ENCODE measurements at regions of chr4 and their contacts with region 1.

Region 1: DNA sequence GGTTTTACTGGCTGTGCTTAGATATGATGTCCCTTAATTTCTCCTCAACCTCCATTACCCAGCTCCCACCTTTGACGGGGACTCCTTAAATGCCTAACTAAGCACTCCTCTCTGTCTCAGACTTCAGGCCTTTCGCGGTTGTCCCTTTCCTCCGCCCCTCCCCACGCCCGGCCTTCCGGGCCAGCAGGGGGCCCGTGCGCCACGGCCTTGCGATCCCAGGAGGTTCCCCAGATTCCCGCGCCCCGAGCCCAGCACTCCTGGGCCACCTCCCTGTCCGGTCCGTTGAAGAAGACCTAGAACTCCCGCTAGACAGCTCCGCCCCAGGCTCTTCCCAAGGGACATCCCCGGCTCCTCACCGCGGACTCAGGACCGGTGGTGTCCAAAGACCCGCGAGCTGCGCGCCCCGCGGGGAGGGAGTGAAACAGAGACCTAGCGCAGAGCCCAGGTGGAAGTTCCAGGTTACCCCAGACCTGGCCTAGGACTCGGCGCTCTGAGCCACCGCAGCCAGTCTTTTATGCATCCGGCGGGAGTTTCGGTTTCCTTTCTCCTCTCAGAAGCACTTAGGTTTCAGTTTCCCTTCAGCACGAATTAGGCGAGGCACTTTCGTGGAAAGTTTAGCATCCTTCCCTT is at the start of gene DDX60:
- DNase-seq: peak; percentile 94
- ATAC-seq: peak; percentile 95
- H3K4me3 Mint-ChIP-seq: peak within 1 kb of the TSS; percentile 94
- H3K27ac Mint-ChIP-seq: peak within 1 kb of the TSS; percentile 98
- H3K4me1 Mint-ChIP-seq: peaks cover 60% of the 10 kb centered on the region
- H3K27me3 Mint-ChIP-seq: no peaks in the 10 kb centered on the region
- total RNA-seq, gene DDX60: 111 to 115 TPM

Region 2: DNA sequence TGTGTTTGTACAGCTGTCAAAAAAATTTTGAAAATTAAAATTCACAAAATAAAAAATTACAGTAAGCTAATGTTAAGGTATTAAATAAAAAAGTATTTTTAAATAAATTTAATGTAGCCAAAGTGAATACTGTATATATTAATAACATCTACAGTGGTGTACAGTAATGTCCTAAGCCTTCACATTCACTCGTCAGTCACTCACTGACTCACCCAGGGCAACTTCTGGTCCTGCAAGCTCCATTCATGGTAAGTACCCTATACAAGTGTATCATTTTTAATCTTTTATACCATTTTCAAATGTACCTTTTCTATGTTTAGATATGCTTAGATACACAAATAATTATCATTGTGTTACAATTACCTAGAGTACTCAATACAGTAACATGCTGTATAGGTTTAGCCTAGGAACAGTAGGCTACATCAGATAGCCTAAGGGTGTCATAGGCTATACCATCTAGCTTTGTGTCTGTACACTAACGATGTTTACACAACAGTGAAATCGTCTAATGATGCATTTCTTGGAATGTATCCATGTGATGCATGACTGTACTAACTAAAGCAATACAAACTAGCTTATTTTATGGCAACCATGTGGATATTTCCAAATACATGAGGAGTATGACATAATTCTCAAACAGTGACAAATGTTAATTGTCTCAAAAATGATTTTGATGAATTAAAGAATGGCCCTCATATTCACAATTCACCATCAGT is 13.5 kb before region 1 on chr4:
- CTCF ChIA-PET with region 1: interaction called, 10 read pairs
- POLR2A ChIA-PET with region 1: interaction called, 12 read pairs
- DNase-seq: no peak
- ATAC-seq: no peak
- H3K4me3 Mint-ChIP-seq: no peak overlapping the region
- H3K27ac Mint-ChIP-seq: no peak overlapping the region
- H3K4me1 Mint-ChIP-seq: peaks cover 35% of the 10 kb centered on the region
- H3K27me3 Mint-ChIP-seq: no peaks in the 10 kb centered on the region

Region 3: GRCh38 chr4:168480931-168481611 is 162.7 kb after region 1 on chr4:
- CTCF ChIA-PET with region 1: no interaction called
- POLR2A ChIA-PET with region 1: interaction called, 27 read pairs
- DNase-seq: peak; percentile 74
- ATAC-seq: peak; percentile 63
- H3K4me3 Mint-ChIP-seq: peak overlapping the region; percentile 96
- H3K27ac Mint-ChIP-seq: peak overlapping the region; percentile 97
- H3K4me1 Mint-ChIP-seq: peaks cover 59% of the 10 kb centered on the region
- H3K27me3 Mint-ChIP-seq: no peaks in the 10 kb centered on the region